PC-9 (cell line): ENCODE measurements at regions of chr17 and their contacts with region 1.

Region 1: GRCh38 chr17:75549221-75550138 is 24.0 kb downstream of the LLGL2 start:
- DNase-seq: peak; percentile 97 to 98
- H3K4me3 ChIP-seq: peak overlapping the region; percentile 51; the same call in 1 of the 2 replicates
- H3K27ac ChIP-seq: peak overlapping the region; percentile 94
- H3K4me1 ChIP-seq: peaks cover 31% of the 10 kb centered on the region
- H3K27me3 ChIP-seq: no peaks in the 10 kb centered on the region
- CTCF ChIP-seq: peak; percentile 17; the same call in 1 of the 2 replicates

Region 2: DNA sequence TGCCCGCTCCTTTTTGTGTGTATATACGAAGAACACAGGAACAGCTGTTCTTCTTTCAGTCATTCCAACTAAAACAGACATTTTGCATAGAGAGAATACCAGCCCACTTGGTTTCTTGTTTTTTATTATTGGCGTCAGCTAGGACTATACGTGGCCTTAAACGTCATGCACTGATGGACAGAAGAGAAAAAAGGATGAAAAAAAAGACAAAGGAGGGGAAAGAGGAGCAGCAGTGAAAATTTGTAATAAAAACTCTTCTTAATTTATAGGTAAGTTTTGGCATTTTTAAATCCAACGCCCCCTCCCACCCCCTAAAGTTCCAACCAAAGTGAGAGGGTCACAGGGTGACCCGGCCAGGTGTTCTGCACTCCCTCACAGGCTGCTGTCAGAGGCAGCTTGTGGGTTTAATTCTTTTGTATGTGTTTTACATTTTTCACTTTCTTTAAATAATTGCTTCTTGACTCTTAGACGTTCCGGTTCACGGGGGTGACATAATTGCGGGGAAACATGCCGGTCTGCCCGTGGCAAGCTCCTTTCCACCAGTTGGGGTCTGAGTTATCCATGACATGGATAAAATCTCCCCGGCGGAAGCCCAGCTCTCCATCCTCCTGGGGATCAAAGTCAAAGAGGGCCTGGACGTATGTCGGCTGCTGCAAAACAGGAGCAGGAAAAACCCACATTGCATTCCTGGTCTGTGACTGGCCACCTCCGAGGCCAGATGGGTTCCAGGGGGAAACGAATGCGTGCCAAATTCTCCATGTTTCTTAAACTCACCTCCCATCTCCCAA is 229.4 kb before region 1 on chr17:
- CTCF ChIA-PET with region 1: interaction called, 17 read pairs
- POLR2A ChIA-PET with region 1: no interaction called
- intact Hi-C with region 1: no loop called
- DNase-seq: no peak
- H3K4me3 ChIP-seq: no peak overlapping the region
- H3K27ac ChIP-seq: no peak overlapping the region
- H3K4me1 ChIP-seq: no peaks in the 10 kb centered on the region
- H3K27me3 ChIP-seq: no peaks in the 10 kb centered on the region
- CTCF ChIP-seq: no peak

Region 3: DNA sequence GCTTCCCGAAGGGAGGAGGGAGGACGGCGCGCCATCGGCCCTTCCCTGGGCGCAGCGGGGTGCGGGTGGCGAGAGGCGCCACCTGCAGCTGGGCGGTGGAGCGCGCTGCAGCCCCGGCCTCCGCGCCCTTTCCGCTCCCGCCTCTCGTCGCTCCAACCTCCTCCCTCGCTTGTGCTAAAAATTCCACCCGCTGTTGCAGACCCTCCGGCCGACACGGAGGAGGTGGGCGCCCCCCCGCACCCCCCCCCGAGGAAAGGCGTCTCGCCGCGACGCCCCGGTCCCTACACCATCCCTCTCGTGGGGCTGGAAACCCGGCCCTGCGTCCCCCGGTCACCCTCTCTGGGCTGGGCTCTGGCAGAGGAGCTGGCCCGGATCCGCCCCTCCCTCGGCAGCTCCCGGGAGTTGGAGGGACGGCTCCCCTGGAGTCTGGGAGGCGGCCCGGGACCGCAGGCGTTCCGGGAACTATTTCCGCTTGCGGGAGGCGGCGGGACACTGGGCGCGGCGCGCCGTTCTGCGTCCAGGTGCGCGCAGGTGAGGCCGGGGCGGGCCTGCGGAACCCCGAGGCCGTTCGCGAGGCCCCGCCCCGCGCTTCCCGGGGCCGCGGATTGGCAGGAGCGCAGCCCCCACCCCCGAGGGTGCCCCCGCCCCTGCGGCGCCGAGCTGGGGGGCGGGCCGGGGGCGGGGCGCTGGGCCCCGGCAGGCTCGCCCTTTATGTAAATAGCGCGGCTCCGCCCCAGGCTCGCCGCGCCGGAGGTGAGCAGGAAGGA is 24.3 kb before region 1 on chr17 and contains the start of gene LLGL2:
- CTCF ChIA-PET with region 1: interaction called, 7 read pairs
- POLR2A ChIA-PET with region 1: interaction called, 35 read pairs
- intact Hi-C with region 1: no loop called
- DNase-seq: peak; percentile 77 to 95
- H3K4me3 ChIP-seq: peak within 1 kb of the TSS; percentile 100
- H3K27ac ChIP-seq: peak within 1 kb of the TSS; percentile 55
- H3K4me1 ChIP-seq: peaks cover 21% of the 10 kb centered on the region
- H3K27me3 ChIP-seq: no peaks in the 10 kb centered on the region
- CTCF ChIP-seq: peak; percentile 60
- total RNA-seq, gene LLGL2: 138 and 156 TPM in 2 replicates

Region 4: GRCh38 chr17:75531730-75532090 is 17.8 kb before region 1 on chr17:
- CTCF ChIA-PET with region 1: no interaction called
- POLR2A ChIA-PET with region 1: interaction called, 35 read pairs
- intact Hi-C with region 1: loop called (anchors 1 kb)
- DNase-seq: peak; percentile 87 to 92
- H3K4me3 ChIP-seq: no peak overlapping the region
- H3K27ac ChIP-seq: peak overlapping the region; percentile 89
- H3K4me1 ChIP-seq: peaks cover 32% of the 10 kb centered on the region
- H3K27me3 ChIP-seq: no peaks in the 10 kb centered on the region
- CTCF ChIP-seq: no peak

Region 5: DNA sequence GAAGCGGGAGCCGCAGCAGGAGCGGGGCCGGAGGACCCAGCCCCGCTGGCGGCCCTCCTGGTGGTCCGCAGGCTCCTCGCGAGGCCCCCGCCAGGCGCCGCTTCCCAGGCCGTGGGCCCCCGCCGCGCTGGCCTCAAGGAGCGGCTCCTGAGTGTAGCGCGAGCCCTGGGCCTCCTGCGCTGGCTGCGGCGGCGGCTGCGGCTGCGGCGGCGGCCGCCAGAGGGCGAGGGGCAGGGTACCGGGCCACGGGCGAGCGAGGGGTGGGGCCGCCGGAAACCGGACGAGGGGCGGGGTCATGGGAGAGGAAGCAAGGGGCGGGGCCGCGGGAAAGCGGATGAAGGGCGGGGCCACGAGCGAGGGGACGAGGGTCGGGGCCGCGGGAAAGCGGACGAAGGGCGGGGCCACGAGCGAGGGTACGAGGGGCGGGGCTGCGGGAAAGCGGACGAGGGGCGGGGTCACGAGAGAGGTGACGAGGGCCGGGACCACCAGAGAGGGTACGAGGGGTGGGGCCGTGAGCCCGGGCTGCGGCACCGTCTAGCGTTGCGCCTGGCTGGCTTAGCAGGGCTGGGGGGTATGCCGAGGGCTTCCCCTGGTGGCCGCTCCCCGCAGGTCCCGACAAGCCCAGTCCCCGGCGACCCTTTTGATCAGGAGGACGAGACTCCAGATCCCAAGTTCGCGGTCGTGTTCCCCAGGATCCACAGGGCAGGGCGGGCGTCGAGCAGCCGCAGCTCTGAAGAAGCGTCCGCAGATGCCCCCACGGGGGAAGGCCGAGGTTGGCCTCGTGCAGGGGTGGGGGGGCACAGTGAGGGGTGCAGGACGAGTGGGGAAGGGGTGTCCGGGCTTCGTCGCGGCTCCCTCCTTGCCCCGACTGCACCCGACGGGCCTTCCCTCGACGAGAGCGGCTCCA is 39.8 kb after region 1 on chr17:
- CTCF ChIA-PET with region 1: no interaction called
- POLR2A ChIA-PET with region 1: no interaction called
- intact Hi-C with region 1: loop called (anchors 5 kb)
- DNase-seq: peak; percentile 51 to 93
- H3K4me3 ChIP-seq: peak overlapping the region; percentile 61
- H3K27ac ChIP-seq: no peak overlapping the region
- H3K4me1 ChIP-seq: no peaks in the 10 kb centered on the region
- H3K27me3 ChIP-seq: no peaks in the 10 kb centered on the region
- CTCF ChIP-seq: no peak; the same call in 1 of the 2 replicates

Region 6: GRCh38 chr17:75610103-75610984 is 60.9 kb after region 1 on chr17:
- CTCF ChIA-PET with region 1: interaction called, 20 read pairs
- POLR2A ChIA-PET with region 1: interaction called, 4 read pairs
- intact Hi-C with region 1: no loop called
- DNase-seq: peak in 1 of 2 experiments; percentile 80
- H3K4me3 ChIP-seq: no peak overlapping the region
- H3K27ac ChIP-seq: no peak overlapping the region
- H3K4me1 ChIP-seq: peaks cover 16% of the 10 kb centered on the region
- H3K27me3 ChIP-seq: no peaks in the 10 kb centered on the region
- CTCF ChIP-seq: no peak

Region 7: GRCh38 chr17:75738218-75738802 is 188.8 kb after region 1 on chr17:
- CTCF ChIA-PET with region 1: no interaction called
- POLR2A ChIA-PET with region 1: interaction called, 12 read pairs
- intact Hi-C with region 1: no loop called
- DNase-seq: no peak
- H3K4me3 ChIP-seq: no peak overlapping the region
- H3K27ac ChIP-seq: no peak overlapping the region
- H3K4me1 ChIP-seq: no peaks in the 10 kb centered on the region
- H3K27me3 ChIP-seq: no peaks in the 10 kb centered on the region
- CTCF ChIP-seq: no peak